ENCODE measurements at regions of chr3 and their contacts with region 1.

Region 1: DNA sequence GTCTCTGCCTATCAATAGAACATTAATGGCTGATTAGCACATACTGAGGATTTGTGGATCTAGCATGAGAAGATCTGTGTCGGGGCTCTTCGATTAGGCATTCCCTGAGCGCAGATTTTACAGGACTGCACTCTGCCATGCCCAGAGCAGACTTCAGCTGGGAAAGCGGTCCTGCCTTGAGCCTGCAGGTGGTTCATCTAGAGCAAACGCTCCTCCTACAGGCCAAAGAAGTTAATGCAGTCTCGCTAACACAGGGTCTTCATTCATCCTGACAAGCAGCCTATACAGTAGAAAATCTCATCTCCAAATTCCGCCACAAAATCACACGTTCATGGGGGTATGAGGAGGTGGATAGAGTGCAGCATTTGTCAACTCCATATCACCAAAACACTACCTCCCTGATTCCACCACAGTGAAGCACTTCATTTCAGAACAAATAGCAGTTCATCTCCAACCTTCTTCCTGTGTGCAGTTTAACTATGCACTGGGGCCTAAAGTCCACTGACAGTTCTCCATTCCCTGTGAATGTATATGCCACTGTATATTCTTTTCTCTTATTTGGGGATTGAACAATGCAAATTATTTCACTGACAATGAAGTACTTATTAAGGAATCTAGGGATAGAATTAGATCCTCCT is 405.8 kb downstream of the IGSF11 start:
- DNase-seq: peak; percentile 79
- H3K4me3 Mint-ChIP-seq: no peak overlapping the region
- H3K27ac Mint-ChIP-seq: no peak overlapping the region
- H3K4me1 Mint-ChIP-seq: no peaks in the 10 kb centered on the region
- H3K27me3 Mint-ChIP-seq: no peaks in the 10 kb centered on the region
- CTCF ChIP-seq: peak; percentile 92

Region 2: GRCh38 chr3:117616227-117616626 is 1012.6 kb before region 1 on chr3:
- CTCF ChIA-PET with region 1: no interaction called
- POLR2A ChIA-PET with region 1: no interaction called
- intact Hi-C with region 1: loop called (anchors 10 kb)
- DNase-seq: no peak
- H3K4me3 Mint-ChIP-seq: no peak overlapping the region
- H3K27ac Mint-ChIP-seq: no peak overlapping the region
- H3K4me1 Mint-ChIP-seq: no peaks in the 10 kb centered on the region
- H3K27me3 Mint-ChIP-seq: no peaks in the 10 kb centered on the region
- CTCF ChIP-seq: peak; percentile 11

Region 3: GRCh38 chr3:118102737-118103136 is 526.1 kb before region 1 on chr3:
- CTCF ChIA-PET with region 1: no interaction called
- POLR2A ChIA-PET with region 1: no interaction called
- intact Hi-C with region 1: loop called (anchors 10 kb)
- DNase-seq: peak; percentile 47
- H3K4me3 Mint-ChIP-seq: no peak overlapping the region
- H3K27ac Mint-ChIP-seq: no peak overlapping the region
- H3K4me1 Mint-ChIP-seq: peaks cover 16% of the 10 kb centered on the region
- H3K27me3 Mint-ChIP-seq: no peaks in the 10 kb centered on the region
- CTCF ChIP-seq: no peak

Region 4: GRCh38 chr3:118408431-118408830 is 220.4 kb before region 1 on chr3:
- CTCF ChIA-PET with region 1: no interaction called
- POLR2A ChIA-PET with region 1: no interaction called
- intact Hi-C with region 1: loop called (anchors 10 kb)
- DNase-seq: peak; percentile 73
- H3K4me3 Mint-ChIP-seq: no peak overlapping the region
- H3K27ac Mint-ChIP-seq: no peak overlapping the region
- H3K4me1 Mint-ChIP-seq: peaks cover 7% of the 10 kb centered on the region
- H3K27me3 Mint-ChIP-seq: no peaks in the 10 kb centered on the region
- CTCF ChIP-seq: no peak

Region 5: DNA sequence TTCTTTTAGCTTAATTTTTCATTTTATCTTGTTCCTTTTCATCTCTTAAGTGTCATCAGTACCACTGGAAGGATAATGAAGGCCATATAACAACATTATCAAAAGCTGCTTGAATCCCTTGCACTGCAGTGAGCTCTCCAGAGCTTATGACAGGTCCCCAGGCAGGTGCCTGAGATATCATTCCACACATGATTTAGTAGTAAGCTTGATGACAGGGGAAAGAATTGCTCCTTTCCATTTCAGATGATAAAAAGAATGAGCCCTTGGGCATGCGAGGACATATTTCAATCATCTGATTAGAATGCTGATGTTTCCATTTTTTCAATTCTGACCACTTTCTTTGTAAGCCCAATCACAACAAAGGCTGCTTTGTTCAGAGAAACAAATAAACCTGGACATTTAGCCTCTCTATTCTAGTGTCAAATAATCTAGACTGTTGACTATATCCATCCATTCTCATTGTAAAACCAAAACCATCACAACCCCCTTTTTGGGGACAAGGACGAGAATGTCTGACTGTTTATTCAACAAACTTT is 162.0 kb before region 1 on chr3:
- CTCF ChIA-PET with region 1: no interaction called
- POLR2A ChIA-PET with region 1: no interaction called
- intact Hi-C with region 1: no loop called
- DNase-seq: no peak
- H3K4me3 Mint-ChIP-seq: no peak overlapping the region
- H3K27ac Mint-ChIP-seq: no peak overlapping the region
- H3K4me1 Mint-ChIP-seq: no peaks in the 10 kb centered on the region
- H3K27me3 Mint-ChIP-seq: no peaks in the 10 kb centered on the region
- CTCF ChIP-seq: no peak

Region 6: GRCh38 chr3:118740722-118741290 is 112.0 kb after region 1 on chr3:
- CTCF ChIA-PET with region 1: no interaction called
- POLR2A ChIA-PET with region 1: no interaction called
- intact Hi-C with region 1: no loop called
- DNase-seq: no peak
- H3K4me3 Mint-ChIP-seq: no peak overlapping the region
- H3K27ac Mint-ChIP-seq: no peak overlapping the region
- H3K4me1 Mint-ChIP-seq: peaks cover 6% of the 10 kb centered on the region
- H3K27me3 Mint-ChIP-seq: no peaks in the 10 kb centered on the region
- CTCF ChIP-seq: no peak

Region 7: DNA sequence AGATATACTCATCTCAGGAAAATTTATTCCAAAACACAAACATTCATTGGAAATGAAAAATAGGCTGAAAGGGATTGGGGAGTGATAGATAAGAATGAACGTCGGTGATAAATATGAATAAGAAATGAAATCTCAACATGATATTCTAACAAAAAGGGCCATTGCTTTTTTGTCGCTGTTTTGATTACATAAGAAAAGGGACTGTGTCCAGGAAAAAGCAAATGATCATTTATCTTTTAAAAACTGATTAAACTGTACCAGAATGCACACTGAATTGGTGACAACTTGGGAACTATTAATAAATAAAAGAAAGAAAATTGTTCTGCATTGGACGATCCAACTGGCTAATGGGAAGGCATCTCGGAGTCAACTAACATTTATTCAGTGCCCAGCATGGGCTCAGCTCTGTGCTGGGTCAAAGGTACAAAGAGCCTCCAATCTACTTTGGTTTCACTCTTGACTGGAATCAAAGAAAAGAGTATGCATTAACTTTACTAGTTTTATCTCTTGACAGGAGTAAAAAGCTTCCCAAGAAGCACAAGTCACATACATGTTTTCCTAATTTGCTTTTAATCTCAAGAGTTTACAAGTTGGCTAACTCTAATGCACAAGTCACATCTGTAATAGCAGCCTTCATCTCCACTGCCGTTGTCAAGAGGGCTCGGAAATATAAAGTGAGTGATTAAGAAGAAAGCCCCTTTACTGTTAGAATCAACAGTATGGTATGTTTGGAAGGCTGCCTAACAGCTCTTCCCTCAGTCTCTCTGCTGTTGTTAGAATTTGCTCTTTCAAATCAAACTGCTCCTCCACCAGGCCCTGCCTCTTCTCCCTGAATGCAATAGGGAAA is 125.8 kb after region 1 on chr3:
- CTCF ChIA-PET with region 1: no interaction called
- POLR2A ChIA-PET with region 1: no interaction called
- intact Hi-C with region 1: no loop called
- DNase-seq: no peak
- H3K4me3 Mint-ChIP-seq: no peak overlapping the region
- H3K27ac Mint-ChIP-seq: no peak overlapping the region
- H3K4me1 Mint-ChIP-seq: no peaks in the 10 kb centered on the region
- H3K27me3 Mint-ChIP-seq: no peaks in the 10 kb centered on the region
- CTCF ChIP-seq: no peak

Region 8: GRCh38 chr3:119359476-119360326 is 730.9 kb after region 1 on chr3:
- CTCF ChIA-PET with region 1: no interaction called
- POLR2A ChIA-PET with region 1: no interaction called
- intact Hi-C with region 1: no loop called
- DNase-seq: no peak
- H3K4me3 Mint-ChIP-seq: no peak overlapping the region
- H3K27ac Mint-ChIP-seq: no peak overlapping the region
- H3K4me1 Mint-ChIP-seq: no peaks in the 10 kb centered on the region
- H3K27me3 Mint-ChIP-seq: no peaks in the 10 kb centered on the region
- CTCF ChIP-seq: no peak

Region 9: DNA sequence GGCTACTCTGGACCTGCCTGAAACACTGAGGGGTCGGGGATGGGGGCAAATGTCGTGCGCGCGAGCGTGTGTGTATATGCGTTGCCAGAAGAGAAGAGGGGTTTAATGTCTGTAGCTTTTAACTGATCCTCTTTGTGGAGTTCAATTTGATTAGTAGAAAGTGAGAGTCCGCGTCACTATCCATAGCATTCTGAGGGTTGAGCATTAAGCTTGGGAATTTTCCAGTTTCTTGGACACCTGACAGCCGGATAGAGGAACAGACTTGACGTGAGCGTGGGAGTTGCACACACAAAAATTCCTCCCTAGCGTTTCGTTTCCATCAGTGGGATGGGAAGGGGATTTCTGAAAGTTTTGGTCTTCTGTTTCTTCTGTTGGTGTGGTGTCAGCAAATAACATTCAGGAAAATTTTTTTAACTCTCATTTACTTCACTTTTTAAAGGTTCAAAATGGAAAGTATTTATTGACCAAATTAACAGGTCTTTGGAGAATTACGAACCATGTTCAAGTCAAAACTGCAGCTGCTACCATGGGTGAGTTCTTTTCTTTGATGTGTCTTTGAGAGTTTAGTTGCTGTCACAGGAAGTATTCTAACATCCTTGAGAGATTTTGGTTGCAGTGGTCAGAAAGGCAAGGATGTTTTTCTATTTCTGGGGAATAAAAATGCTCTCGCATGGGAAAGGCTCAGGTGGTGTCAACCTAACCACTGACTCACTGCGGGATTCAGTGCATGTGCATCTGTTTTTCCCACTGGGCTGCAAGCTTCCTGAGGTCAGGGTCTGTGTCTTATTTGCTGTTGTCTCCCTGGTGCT is 840.8 kb after region 1 on chr3:
- CTCF ChIA-PET with region 1: interaction called, 10 read pairs
- POLR2A ChIA-PET with region 1: no interaction called
- intact Hi-C with region 1: no loop called
- DNase-seq: no peak
- H3K4me3 Mint-ChIP-seq: peak overlapping the region; percentile 94
- H3K27ac Mint-ChIP-seq: peak overlapping the region; percentile 94
- H3K4me1 Mint-ChIP-seq: peaks cover 25% of the 10 kb centered on the region
- H3K27me3 Mint-ChIP-seq: no peaks in the 10 kb centered on the region
- CTCF ChIP-seq: no peak

Measured in MCF 10A (cell line).